Mammary epithelial cell (primary cell): ENCODE measurements at regions of chrX and their contacts with region 1.

Region 1: DNA sequence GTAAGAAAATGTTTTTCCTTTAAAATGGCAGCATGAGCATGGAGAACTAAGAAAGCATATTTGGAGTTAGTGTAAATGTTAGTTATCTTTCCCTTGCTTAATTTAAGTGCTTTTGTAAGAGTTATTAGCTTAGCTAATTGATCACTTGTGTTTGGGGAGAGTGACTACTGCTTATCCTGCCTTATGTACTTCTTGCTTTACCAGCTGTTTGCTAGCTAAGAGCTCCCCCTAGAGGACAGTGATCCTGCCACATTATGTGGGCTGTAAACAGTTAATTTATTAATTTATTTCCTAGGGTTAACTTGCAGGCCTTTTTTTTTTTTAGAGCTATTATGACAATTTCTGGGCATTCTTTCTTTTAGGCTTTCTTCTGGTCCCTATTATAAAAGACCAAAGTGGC is 435.8 kb downstream of the MAGEB5 start:
- DNase-seq: no peak
- H3K4me3 ChIP-seq: no peak overlapping the region
- H3K27ac ChIP-seq: no peak overlapping the region
- H3K4me1 ChIP-seq: no peaks in the 10 kb centered on the region
- H3K27me3 ChIP-seq: no peaks in the 10 kb centered on the region
- CTCF ChIP-seq: peak; percentile 36 to 52

Region 2: GRCh38 chrX:26958261-26958660 is 306.5 kb after region 1 on chrX:
- CTCF ChIA-PET with region 1: no interaction called
- dilution Hi-C with region 1: no loop called
- in situ Hi-C with region 1: no loop called
- intact Hi-C with region 1: no loop called
- DNase-seq: no peak
- H3K4me3 ChIP-seq: no peak overlapping the region
- H3K27ac ChIP-seq: no peak overlapping the region
- H3K4me1 ChIP-seq: no peaks in the 10 kb centered on the region
- H3K27me3 ChIP-seq: no peaks in the 10 kb centered on the region
- CTCF ChIP-seq: no peak

Region 3: GRCh38 chrX:27336466-27337091 is 684.8 kb after region 1 on chrX:
- CTCF ChIA-PET with region 1: no interaction called
- dilution Hi-C with region 1: no loop called
- in situ Hi-C with region 1: no loop called
- intact Hi-C with region 1: loop called (anchors 2 kb)
- DNase-seq: peak; percentile 16
- H3K4me3 ChIP-seq: no peak overlapping the region
- H3K27ac ChIP-seq: no peak overlapping the region
- H3K4me1 ChIP-seq: no peaks in the 10 kb centered on the region
- H3K27me3 ChIP-seq: no peaks in the 10 kb centered on the region
- CTCF ChIP-seq: peak; percentile 92 to 97